Left ventricle myocardium superior (tissue), 1 donor: ENCODE measurements at regions of chr11 and their contacts with region 1.

Region 1: GRCh38 chr11:131867457-131868257 is 497.2 kb downstream of the NTM start:
- DNase-seq: peak; percentile 75
- ATAC-seq: peak; percentile 87

Region 2: GRCh38 chr11:132024587-132025295 is 157.1 kb after region 1 on chr11:
- intact Hi-C with region 1: loop called (anchors 5 kb)
- DNase-seq: no peak
- ATAC-seq: no peak